Sigmoid colon (tissue), 7 donors: ENCODE measurements at regions of chr17 and their contacts with region 1.

Region 1: GRCh38 chr17:18260332-18261144 is at the start of gene MIEF2:
- DNase-seq: peak; percentile 98
- H3K4me3 ChIP-seq: peak within 1 kb of the TSS; percentile 83 to 96 (median 88)
- H3K27ac ChIP-seq: peak within 1 kb of the TSS; percentile 90 to 98 (median 95)
- H3K4me1 ChIP-seq: peaks cover 0 to 52% (median 43%) of the 10 kb centered on the region in 4 donors
- H3K27me3 ChIP-seq: no peaks in the 10 kb centered on the region
- CTCF ChIP-seq: no peak
- EP300 ChIP-seq: no peak
- POLR2A ChIP-seq: peak in 1 of 2 donors; percentile 30
- total RNA-seq, gene MIEF2: 8.7 to 14.4 (median 11.7) TPM

Region 2: GRCh38 chr17:18161207-18162145 is 99.1 kb before region 1 on chr17:
- intact Hi-C with region 1: no loop called
- DNase-seq: no peak
- H3K4me3 ChIP-seq: no peak overlapping the region
- H3K27ac ChIP-seq: no peak overlapping the region
- H3K4me1 ChIP-seq: peaks cover 0 to 17% (median 8%) of the 10 kb centered on the region in 4 donors
- H3K27me3 ChIP-seq: no peaks in the 10 kb centered on the region
- CTCF ChIP-seq: no peak
- EP300 ChIP-seq: no peak
- POLR2A ChIP-seq: no peak

Region 3: GRCh38 chr17:18172531-18173278 is 87.8 kb before region 1 on chr17:
- intact Hi-C with region 1: no loop called
- DNase-seq: no peak
- H3K4me3 ChIP-seq: no peak overlapping the region
- H3K27ac ChIP-seq: no peak overlapping the region
- H3K4me1 ChIP-seq: no peaks in the 10 kb centered on the region
- H3K27me3 ChIP-seq: no peaks in the 10 kb centered on the region
- CTCF ChIP-seq: no peak
- EP300 ChIP-seq: no peak
- POLR2A ChIP-seq: no peak

Region 4: GRCh38 chr17:18191967-18192366 is 68.6 kb before region 1 on chr17:
- intact Hi-C with region 1: no loop called
- DNase-seq: no peak
- H3K4me3 ChIP-seq: no peak overlapping the region
- H3K27ac ChIP-seq: peak overlapping the region in 3 of 4 donors; percentile 98 to 99 (median 99)
- H3K4me1 ChIP-seq: peaks cover 0 to 69% (median 63%) of the 10 kb centered on the region in 4 donors
- H3K27me3 ChIP-seq: no peaks in the 10 kb centered on the region
- CTCF ChIP-seq: peak in 1 of 4 experiments; percentile 18
- EP300 ChIP-seq: no peak
- POLR2A ChIP-seq: no peak

Region 5: GRCh38 chr17:18225121-18225566 is 35.4 kb before region 1 on chr17:
- intact Hi-C with region 1: loop called (anchors 2 kb)
- DNase-seq: peak; percentile 99
- H3K4me3 ChIP-seq: peak overlapping the region; percentile 21 to 68 (median 56)
- H3K27ac ChIP-seq: peak overlapping the region; percentile 54 to 70 (median 63)
- H3K4me1 ChIP-seq: peaks cover 0 to 26% (median 19%) of the 10 kb centered on the region in 4 donors
- H3K27me3 ChIP-seq: no peaks in the 10 kb centered on the region
- CTCF ChIP-seq: no peak
- EP300 ChIP-seq: no peak
- POLR2A ChIP-seq: no peak

Region 6: GRCh38 chr17:18314731-18315561 is 54.4 kb after region 1 on chr17 and contains the starts of genes SMCR8 and TOP3A:
- intact Hi-C with region 1: loop called (anchors 2 kb)
- DNase-seq: peak; percentile 99
- H3K4me3 ChIP-seq: peak within 1 kb of the TSS; percentile 81 to 93 (median 90)
- H3K27ac ChIP-seq: peak within 1 kb of the TSS; percentile 85 to 92 (median 90)
- H3K4me1 ChIP-seq: peaks cover 0 to 71% (median 63%) of the 10 kb centered on the region in 4 donors
- H3K27me3 ChIP-seq: no peaks in the 10 kb centered on the region
- CTCF ChIP-seq: no peak
- EP300 ChIP-seq: peak in 1 of 4 donors; percentile 37
- POLR2A ChIP-seq: peak in 1 of 2 donors; percentile 26
- total RNA-seq, gene SMCR8: 9.3 to 12.2 (median 10.6) TPM
- total RNA-seq, gene TOP3A: 22.1 to 42.4 (median 26.0) TPM

Region 7: DNA sequence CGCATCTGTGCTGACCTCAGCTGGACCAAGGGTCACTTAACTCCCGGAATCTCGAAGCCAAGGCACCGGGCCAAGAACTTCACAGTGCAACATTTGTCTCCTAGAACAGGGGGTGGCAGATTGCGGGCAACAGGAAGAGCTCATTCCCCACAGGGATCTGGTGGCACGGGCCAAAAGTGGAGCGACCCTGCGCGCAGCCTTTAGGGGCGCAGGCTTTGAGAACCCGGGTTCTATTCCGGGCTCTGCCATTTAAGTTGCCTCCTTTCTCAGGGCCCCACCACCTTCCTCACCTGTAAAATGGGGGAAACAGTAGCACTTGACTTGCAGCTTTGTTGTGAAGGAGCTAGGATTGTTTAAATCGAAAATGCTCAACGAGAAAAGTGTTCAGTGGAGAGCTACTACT is 102.2 kb after region 1 on chr17:
- intact Hi-C with region 1: no loop called
- DNase-seq: peak; percentile 89
- H3K4me3 ChIP-seq: peak overlapping the region; percentile 68 to 96 (median 90)
- H3K27ac ChIP-seq: peak overlapping the region; percentile 74 to 85 (median 80)
- H3K4me1 ChIP-seq: peaks cover 0 to 18% (median 9%) of the 10 kb centered on the region in 4 donors
- H3K27me3 ChIP-seq: no peaks in the 10 kb centered on the region
- CTCF ChIP-seq: no peak
- EP300 ChIP-seq: no peak
- POLR2A ChIP-seq: no peak